AG04450 (cell line): ENCODE measurements at regions of chr17 and their contacts with region 1.

Region 1: DNA sequence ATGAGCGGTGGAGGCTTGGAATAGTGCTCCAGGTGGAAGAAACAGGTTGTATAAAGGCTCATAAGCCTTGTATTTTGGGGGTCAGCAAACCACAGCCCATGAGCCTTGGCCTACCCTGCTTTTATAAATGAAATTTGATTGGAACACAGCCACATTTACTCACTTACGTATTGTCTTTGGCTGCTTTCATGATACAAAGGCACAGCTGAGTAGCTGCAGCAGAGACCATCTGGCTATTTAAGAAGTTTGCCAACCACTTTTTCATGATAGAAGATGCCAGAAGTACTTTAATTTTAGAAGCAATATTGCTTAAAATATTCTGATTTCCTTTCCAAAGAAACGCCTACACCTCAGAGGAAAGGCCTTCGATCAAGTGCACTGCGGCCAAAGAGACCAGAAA is 73.8 kb downstream of the C17orf58 start:
- DNase-seq: no peak
- H3K4me3 ChIP-seq: no peak overlapping the region
- H3K27ac ChIP-seq: no peak overlapping the region
- H3K27me3 ChIP-seq: no peaks in the 10 kb centered on the region
- CTCF ChIP-seq: no peak

Region 2: DNA sequence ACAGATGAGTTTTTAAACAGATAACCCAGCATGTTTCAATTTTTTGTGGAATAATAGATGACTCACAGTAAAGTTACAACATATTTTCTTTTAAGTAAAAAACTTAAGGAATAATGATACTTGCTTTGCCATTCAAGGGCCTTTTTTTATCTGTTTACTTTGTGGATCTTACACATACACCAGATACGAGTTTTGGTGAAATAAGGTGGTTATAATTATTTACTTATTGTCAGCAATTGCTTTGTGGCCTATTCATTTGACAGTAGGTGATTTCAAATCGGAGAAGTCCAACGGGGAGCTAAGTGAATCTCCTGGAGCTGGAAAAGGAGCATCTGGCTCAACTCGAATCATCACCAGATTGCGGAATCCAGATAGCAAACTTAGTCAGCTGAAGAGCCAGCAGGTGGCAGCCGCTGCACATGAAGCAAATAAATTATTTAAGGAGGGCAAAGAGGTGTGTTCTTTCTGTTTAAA is 30.9 kb before region 1 on chr17:
- CTCF ChIA-PET with region 1: no interaction called
- POLR2A ChIA-PET with region 1: interaction called, 10 read pairs
- DNase-seq: peak; percentile 37
- H3K4me3 ChIP-seq: no peak overlapping the region
- H3K27ac ChIP-seq: no peak overlapping the region
- H3K27me3 ChIP-seq: no peaks in the 10 kb centered on the region
- CTCF ChIP-seq: peak; percentile 40

Region 3: GRCh38 chr17:67942810-67943209 is 20.3 kb after region 1 on chr17:
- CTCF ChIA-PET with region 1: interaction called, 10 read pairs
- POLR2A ChIA-PET with region 1: no interaction called
- DNase-seq: no peak
- H3K4me3 ChIP-seq: no peak overlapping the region
- H3K27ac ChIP-seq: no peak overlapping the region
- H3K27me3 ChIP-seq: no peaks in the 10 kb centered on the region
- CTCF ChIP-seq: peak; percentile 48

Region 4: GRCh38 chr17:69414408-69415274 is 1492.1 kb after region 1 on chr17 and contains the start of gene MAP2K6:
- CTCF ChIA-PET with region 1: no interaction called
- POLR2A ChIA-PET with region 1: no interaction called
- DNase-seq: no peak
- H3K4me3 ChIP-seq: peak within 1 kb of the TSS; percentile 67
- H3K27ac ChIP-seq: no peak within 1 kb of the TSS
- H3K27me3 ChIP-seq: peaks cover 2% of the 10 kb centered on the region
- CTCF ChIP-seq: no peak
- polyA plus RNA-seq, gene MAP2K6: 8.8 and 10.9 TPM in 2 replicates